Activated T-helper 2 cell treated with anti-CD3 and anti-CD28 coated beads, Interferon-gamma antibody, Interleukin-2, Interleukin-4, amounts not matched to agents 10 μg/mL and 5 μg/mL and 100 μg/mL, durations not matched to agents 14 hours and 24 hours and 36 hours (primary cell): ENCODE measurements at regions of chr14 and their contacts with region 1.

Region 1: DNA sequence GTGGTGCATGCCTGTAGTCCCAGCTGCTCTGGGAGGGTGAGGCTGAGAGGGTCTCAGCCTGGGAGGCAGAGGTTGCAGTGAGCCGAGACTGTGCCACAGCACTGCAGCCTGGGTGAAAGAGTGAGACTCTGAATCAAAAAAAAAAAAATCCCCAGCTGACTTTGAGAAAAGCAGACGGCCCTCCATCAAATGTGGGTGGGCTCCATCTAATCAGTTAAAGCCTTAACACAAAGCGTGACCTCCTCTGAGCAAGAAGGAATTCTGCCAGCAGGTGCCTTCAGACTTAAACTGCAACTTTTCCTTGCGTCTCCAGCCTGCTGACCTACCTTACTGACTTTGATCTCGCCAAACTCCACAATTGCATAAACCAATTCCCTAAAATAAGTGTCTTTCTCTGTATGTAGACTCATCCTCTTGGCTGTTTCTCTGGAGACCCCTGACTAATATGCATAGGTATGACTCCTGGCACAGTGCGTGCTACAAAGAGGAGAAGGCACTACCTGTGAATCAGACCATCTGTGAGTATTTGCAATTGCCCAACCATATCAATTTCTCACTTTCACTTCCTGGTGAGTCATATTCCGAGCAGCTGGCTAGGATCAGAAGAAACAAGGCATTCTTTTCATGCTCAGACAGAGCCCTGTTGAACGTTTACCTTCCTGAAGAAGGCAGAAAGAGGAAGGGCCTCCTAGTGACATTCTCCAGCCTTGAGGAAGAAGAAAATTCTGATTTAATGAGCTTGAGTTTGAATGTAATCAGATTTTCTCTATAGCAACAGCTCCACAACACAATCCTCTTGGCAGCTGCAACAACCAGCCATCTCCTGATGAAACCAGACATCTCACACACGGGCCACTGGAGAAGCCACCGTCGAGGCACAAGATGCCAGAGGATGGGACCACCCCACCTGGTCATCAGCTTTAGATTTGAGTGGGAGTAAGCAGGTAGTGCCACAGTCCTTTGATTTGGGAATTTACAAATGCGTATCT is 54.3 kb downstream of the CLMN start:
- DNase-seq: peak; percentile 43
- H3K4me3 Mint-ChIP-seq: no peak overlapping the region
- H3K27ac Mint-ChIP-seq: peak overlapping the region; percentile 2
- H3K4me1 Mint-ChIP-seq: peaks cover 44% of the 10 kb centered on the region
- H3K27me3 Mint-ChIP-seq: peaks cover 2% of the 10 kb centered on the region

Region 2: GRCh38 chr14:95157327-95158189 is 107.8 kb before region 1 on chr14 and contains the start of gene DICER1:
- intact Hi-C with region 1: loop called (anchors 1 kb)
- DNase-seq: peak; percentile 90
- H3K4me3 Mint-ChIP-seq: peak within 1 kb of the TSS; percentile 91
- H3K27ac Mint-ChIP-seq: peak within 1 kb of the TSS; percentile 97
- H3K4me1 Mint-ChIP-seq: peaks cover 31% of the 10 kb centered on the region
- H3K27me3 Mint-ChIP-seq: no peaks in the 10 kb centered on the region
- total RNA-seq, gene DICER1: 64.0 and 67.1 TPM in 2 replicates

Region 3: DNA sequence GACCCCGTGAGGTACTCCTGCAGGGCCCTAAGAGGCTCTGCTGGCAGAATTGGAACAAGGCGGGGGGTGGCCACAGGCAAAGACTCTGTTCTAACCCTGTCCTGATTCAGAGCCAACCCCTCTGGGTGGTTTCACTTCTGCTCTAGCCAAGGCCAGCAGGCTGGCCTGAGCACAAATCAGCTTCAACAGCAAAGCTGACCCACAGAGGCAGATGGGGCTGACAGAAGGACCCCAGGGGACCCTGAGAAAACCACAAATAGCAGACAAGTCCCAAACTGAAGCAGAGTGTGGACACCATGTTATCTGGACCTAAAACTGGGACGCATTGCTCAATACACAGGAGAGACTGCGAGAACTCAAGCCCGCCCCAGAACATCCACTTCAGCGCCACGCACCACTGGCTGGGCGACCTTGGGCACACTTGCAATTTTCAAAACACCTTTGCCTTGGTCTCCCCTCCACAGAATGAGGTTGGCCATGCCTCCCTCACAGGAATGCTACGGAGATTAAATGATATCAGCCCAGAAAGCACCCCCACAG is 31.6 kb before region 1 on chr14:
- intact Hi-C with region 1: no loop called
- DNase-seq: no peak
- H3K4me3 Mint-ChIP-seq: no peak overlapping the region
- H3K27ac Mint-ChIP-seq: no peak overlapping the region
- H3K4me1 Mint-ChIP-seq: no peaks in the 10 kb centered on the region
- H3K27me3 Mint-ChIP-seq: no peaks in the 10 kb centered on the region